Mammary epithelial cell (primary cell): ENCODE measurements at regions of chr3 and their contacts with region 1.

Region 1: DNA sequence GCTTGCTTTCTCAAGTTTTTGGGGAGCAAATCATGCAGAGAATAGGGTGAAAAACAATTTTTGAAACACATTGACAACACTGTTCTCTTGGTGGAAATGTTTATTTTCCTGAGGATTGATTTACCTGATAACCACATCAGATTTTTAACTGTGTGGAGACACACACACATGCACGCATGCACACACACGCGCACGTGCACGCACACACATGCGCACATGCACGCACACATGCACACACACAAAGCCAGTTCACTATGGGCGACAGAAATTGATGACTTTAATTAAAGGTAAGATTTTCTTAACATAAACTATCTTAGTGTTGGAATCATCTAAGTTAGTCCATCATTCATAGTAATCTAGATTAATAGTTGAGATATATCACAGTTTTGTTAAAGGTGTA is 15.3 kb downstream of the LMLN start:
- DNase-seq: no peak
- H3K4me3 ChIP-seq: no peak overlapping the region
- H3K27ac ChIP-seq: no peak overlapping the region
- H3K4me1 ChIP-seq: no peaks in the 10 kb centered on the region
- H3K27me3 ChIP-seq: no peaks in the 10 kb centered on the region
- CTCF ChIP-seq: no peak

Region 2: DNA sequence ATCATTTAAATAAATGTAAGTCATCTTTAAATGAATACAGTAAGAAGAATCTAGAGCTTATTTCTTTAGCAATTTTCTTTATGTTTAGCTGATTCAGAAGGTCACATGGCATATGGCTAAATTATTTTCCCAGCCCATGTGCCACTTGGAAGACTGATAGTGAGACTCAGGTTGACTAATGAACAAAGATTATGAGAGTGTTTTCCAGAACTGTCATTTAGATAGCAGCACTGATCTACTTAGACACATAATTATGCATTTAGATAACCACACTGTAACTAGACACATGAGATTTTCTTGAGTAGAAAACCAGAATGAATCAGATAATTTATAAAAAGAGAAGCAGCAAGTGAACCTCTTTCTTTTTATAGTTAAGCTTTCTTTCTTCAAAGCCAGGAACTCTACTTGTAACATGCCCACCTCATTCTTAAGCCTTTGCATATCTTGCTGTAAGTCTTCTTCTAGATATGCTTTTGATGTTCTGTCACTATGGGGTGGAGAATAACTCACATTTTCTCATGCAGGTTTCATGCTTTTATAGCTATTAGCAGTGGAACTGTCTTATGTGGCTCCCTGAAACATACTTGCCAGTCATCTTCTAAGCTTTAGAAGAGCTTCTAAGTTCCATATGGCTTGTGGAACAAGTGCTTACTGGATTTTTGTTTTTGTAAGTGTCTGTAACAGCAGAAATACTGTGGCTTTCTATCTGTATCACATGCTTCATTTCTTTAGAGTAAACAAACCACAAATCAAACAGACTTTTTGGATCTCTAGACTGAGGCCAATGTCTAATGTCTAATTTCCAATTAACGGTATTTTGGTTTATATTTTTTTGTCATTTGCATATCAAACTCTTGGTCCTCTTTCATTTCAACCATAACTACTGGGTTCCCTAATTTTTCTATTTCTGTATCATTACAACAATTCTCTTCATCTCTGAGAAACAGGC is 86.1 kb after region 1 on chr3:
- CTCF ChIA-PET with region 1: no interaction called
- dilution Hi-C with region 1: loop called (anchors 5 kb)
- in situ Hi-C with region 1: no loop called
- intact Hi-C with region 1: no loop called
- DNase-seq: no peak
- H3K4me3 ChIP-seq: no peak overlapping the region
- H3K27ac ChIP-seq: no peak overlapping the region
- H3K4me1 ChIP-seq: no peaks in the 10 kb centered on the region
- H3K27me3 ChIP-seq: peaks cover 5% of the 10 kb centered on the region
- CTCF ChIP-seq: no peak

Region 3: DNA sequence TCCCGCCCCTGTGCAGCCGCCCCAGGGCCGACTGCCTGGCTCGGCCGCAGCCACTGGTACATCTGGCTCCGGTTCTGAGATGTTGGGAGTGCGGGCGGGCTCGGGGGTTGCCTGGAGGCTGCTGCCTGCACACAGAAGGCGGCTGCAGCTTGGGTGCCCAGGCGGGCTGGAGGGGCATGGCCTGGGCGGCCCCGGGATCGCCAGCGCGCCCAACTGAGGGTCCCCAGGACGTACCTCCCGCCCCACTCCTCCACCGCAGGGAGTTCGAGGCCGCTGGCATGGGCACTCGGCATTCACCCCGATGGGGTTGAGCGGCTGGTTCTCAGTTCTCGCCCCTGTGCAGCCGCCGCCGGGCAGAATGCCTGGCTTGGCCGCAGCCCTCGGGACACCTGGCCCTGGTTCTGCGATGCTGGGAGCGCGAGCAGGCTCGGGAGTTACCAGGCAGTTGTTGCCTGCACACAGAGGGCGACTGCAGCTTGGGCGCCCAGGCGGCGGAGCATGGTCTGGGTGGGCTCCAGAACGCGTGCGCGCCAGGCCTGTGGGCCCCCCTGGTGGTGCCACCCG is 106.1 kb after region 1 on chr3:
- CTCF ChIA-PET with region 1: no interaction called
- dilution Hi-C with region 1: no loop called
- in situ Hi-C with region 1: no loop called
- intact Hi-C with region 1: no loop called
- DNase-seq: no peak
- H3K4me3 ChIP-seq: peak overlapping the region in 1 of 3 experiments; percentile 41
- H3K27ac ChIP-seq: no peak overlapping the region
- H3K4me1 ChIP-seq: peaks cover 17% of the 10 kb centered on the region
- H3K27me3 ChIP-seq: peaks cover 12% of the 10 kb centered on the region
- CTCF ChIP-seq: no peak